GM10248 (cell line): ENCODE measurements at regions of chr3 and their contacts with region 1.

Region 1: GRCh38 chr3:196454935-196455334 is 22.7 kb upstream of the UBXN7 start:
- DNase-seq: no peak
- CTCF ChIP-seq: no peak

Region 2: GRCh38 chr3:196298521-196298920 is 156.4 kb before region 1 on chr3:
- CTCF ChIA-PET with region 1: no interaction called
- POLR2A ChIA-PET with region 1: no interaction called
- DNase-seq: no peak
- CTCF ChIP-seq: no peak

Region 3: GRCh38 chr3:196406811-196407470 is 48.0 kb before region 1 on chr3:
- CTCF ChIA-PET with region 1: no interaction called
- POLR2A ChIA-PET with region 1: no interaction called
- DNase-seq: no peak
- CTCF ChIP-seq: no peak

Region 4: GRCh38 chr3:196440041-196440537 is 14.8 kb before region 1 on chr3:
- CTCF ChIA-PET with region 1: interaction called, 17 read pairs
- POLR2A ChIA-PET with region 1: no interaction called
- DNase-seq: no peak
- CTCF ChIP-seq: no peak

Region 5: DNA sequence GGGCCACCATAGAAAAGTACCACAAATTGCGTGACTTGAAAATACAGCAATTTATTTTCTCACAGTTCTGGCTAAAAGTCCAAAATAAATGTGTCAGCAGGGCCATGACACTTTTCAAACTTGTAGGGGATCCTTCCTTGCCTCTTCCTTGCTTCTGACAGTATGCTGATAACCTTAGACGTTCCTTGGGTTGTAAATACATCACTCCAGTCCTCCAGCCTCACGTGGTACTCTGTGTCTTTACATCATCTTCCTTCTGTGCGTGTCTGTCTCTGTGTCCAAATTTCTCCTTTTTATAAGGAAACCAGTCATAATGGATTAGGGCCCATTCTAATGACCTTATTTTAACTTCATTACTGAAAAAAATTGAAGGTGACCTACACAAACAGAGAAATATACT is 41.2 kb after region 1 on chr3:
- CTCF ChIA-PET with region 1: no interaction called
- POLR2A ChIA-PET with region 1: interaction called, 10 read pairs
- DNase-seq: no peak
- CTCF ChIP-seq: no peak